ENCODE measurements at regions of chr12 and their contacts with region 1.

Region 1: GRCh38 chr12:54201001-54201794 is 12.4 kb upstream of the SMUG1 start:
- DNase-seq: no peak
- ATAC-seq: peak; percentile 97
- H3K4me3 ChIP-seq: no peak overlapping the region
- H3K27ac ChIP-seq: no peak overlapping the region
- H3K4me1 ChIP-seq: peaks cover 15% of the 10 kb centered on the region
- H3K27me3 ChIP-seq: peaks cover 0 to 2% of the 10 kb centered on the region in 2 experiments; a peak in 3 of 4 replicates
- CTCF ChIP-seq: peak; percentile 93 to 98 (median 96)
- EP300 ChIP-seq: no peak
- POLR2A ChIP-seq: no peak
- RAD21 ChIP-seq: peak; percentile 68

Region 2: DNA sequence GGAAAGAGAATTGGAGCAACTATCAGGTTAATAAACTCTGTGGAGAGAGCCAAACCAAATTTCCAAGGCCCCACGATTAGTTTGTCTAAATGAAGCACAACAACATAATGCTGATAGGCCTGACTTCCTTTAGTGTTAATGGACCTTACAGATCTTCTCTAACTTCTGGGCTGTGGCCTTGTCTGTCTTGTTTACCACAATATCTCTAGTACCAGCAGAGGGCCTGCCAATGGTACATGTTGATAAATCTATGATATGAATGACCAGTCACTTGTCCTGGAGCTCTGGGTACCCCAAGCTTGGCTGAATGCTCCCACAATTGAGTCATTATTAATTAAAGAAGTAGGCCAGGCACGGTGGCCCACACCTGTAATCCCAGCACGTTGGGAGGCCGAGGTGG is 370.6 kb before region 1 on chr12:
- CTCF ChIA-PET with region 1: no interaction called
- POLR2A ChIA-PET with region 1: no interaction called
- RAD21 ChIA-PET with region 1: no interaction called
- SMC1A ChIA-PET with region 1: no interaction called
- in situ Hi-C with region 1: no loop called
- intact Hi-C with region 1: no loop called
- DNase-seq: no peak
- ATAC-seq: no peak
- H3K4me3 ChIP-seq: no peak overlapping the region
- H3K27ac ChIP-seq: no peak overlapping the region
- H3K4me1 ChIP-seq: no peaks in the 10 kb centered on the region
- H3K27me3 ChIP-seq: peaks cover 0 to 7% of the 10 kb centered on the region in 2 experiments; a peak in 2 of 4 replicates
- CTCF ChIP-seq: no peak
- EP300 ChIP-seq: no peak
- POLR2A ChIP-seq: no peak
- RAD21 ChIP-seq: no peak

Region 3: DNA sequence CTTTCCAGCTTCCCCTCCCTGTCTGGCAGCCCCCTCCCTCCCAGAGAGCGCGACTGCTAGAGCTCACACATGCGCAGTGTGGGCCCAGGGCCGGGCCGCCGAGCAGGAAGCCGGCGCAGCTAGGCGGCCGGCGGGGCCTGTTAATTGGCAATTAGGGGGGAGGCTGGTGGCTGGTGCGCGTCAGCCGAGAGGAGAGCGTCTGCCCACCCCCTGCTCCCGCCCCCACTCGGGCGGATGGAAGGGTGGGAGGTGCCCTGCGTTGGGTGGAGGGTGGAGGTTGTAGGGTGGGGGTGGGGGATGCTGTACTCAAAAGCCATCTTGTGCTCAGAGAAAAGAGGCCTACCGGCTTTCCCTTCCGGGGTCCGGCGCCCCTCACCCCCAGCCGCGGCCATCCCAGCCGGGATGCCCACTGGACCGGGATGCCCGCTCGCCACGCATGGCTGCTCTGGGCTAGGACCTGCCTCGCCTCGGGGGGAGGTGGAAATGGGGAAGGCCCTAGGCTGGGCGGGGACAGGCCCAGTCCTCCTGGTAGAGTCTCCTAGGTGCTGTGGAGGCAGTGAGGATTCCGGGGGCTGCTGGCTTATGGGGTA is 183.2 kb before region 1 on chr12:
- CTCF ChIA-PET with region 1: interaction called, 343 read pairs
- POLR2A ChIA-PET with region 1: interaction called, 4 read pairs
- RAD21 ChIA-PET with region 1: interaction called, 4 read pairs
- SMC1A ChIA-PET with region 1: interaction called, 9 read pairs
- in situ Hi-C with region 1: loop called (anchors 10 kb)
- intact Hi-C with region 1: no loop called
- DNase-seq: peak; percentile 79
- ATAC-seq: peak; percentile 92
- H3K4me3 ChIP-seq: peak overlapping the region; percentile 88
- H3K27ac ChIP-seq: peak overlapping the region; percentile 80
- H3K4me1 ChIP-seq: peaks cover 21% of the 10 kb centered on the region
- H3K27me3 ChIP-seq: peaks cover 8 to 26% of the 10 kb centered on the region in 2 experiments
- CTCF ChIP-seq: no peak
- EP300 ChIP-seq: peak; percentile 36 to 45; a peak in 1 of 4 replicates
- POLR2A ChIP-seq: peak; percentile 79
- RAD21 ChIP-seq: no peak

Region 4: GRCh38 chr12:54134850-54135249 is 66.3 kb before region 1 on chr12:
- CTCF ChIA-PET with region 1: interaction called, 14 read pairs
- POLR2A ChIA-PET with region 1: no interaction called
- RAD21 ChIA-PET with region 1: interaction called, 9 read pairs
- SMC1A ChIA-PET with region 1: interaction called, 14 read pairs
- in situ Hi-C with region 1: no loop called
- intact Hi-C with region 1: no loop called
- DNase-seq: no peak
- ATAC-seq: peak; percentile 49; the same call in 2 of the 3 replicates
- H3K4me3 ChIP-seq: no peak overlapping the region
- H3K27ac ChIP-seq: no peak overlapping the region
- H3K4me1 ChIP-seq: no peaks in the 10 kb centered on the region
- H3K27me3 ChIP-seq: peaks cover 2 to 10% of the 10 kb centered on the region in 2 experiments; a peak in 3 of 4 replicates
- CTCF ChIP-seq: peak; percentile 22 to 38 (median 34); a peak in 4 of 6 replicates
- EP300 ChIP-seq: no peak
- POLR2A ChIP-seq: no peak
- RAD21 ChIP-seq: peak; percentile 42

Region 5: GRCh38 chr12:54159140-54159539 is 42.1 kb before region 1 on chr12:
- CTCF ChIA-PET with region 1: no interaction called
- POLR2A ChIA-PET with region 1: no interaction called
- RAD21 ChIA-PET with region 1: no interaction called
- SMC1A ChIA-PET with region 1: no interaction called
- in situ Hi-C with region 1: no loop called
- intact Hi-C with region 1: no loop called
- DNase-seq: peak; percentile 7
- ATAC-seq: peak; percentile 100
- H3K4me3 ChIP-seq: no peak overlapping the region
- H3K27ac ChIP-seq: no peak overlapping the region
- H3K4me1 ChIP-seq: no peaks in the 10 kb centered on the region; the same call in 1 of the 2 replicates
- H3K27me3 ChIP-seq: no peaks in the 10 kb centered on the region; a peak in 1 of 4 replicates
- CTCF ChIP-seq: 0 out of 6 replicates have a peak, but pooled peaks of 1 of the 3 experiments have one; percentile 18
- EP300 ChIP-seq: no peak
- POLR2A ChIP-seq: no peak
- RAD21 ChIP-seq: no peak

Measured in GM12878 (cell line).